ENCODE measurements at regions of chr1 and their contacts with region 1.

Region 1: GRCh38 chr1:54335755-54336108 is 70.5 kb downstream of the SSBP3 start:
- DNase-seq: peak; percentile 67 to 84
- ATAC-seq: peak; percentile 74 to 80 (median 76)
- H3K4me3 ChIP-seq: peak overlapping the region; percentile 55
- H3K27ac ChIP-seq: peak overlapping the region; percentile 93
- H3K4me1 ChIP-seq: peaks cover 86% of the 10 kb centered on the region
- H3K27me3 ChIP-seq: no peaks in the 10 kb centered on the region
- CTCF ChIP-seq: no peak

Region 2: GRCh38 chr1:54220004-54220811 is 115.5 kb before region 1 on chr1:
- intact Hi-C with region 1: no loop called
- DNase-seq: peak; percentile 79 to 85
- ATAC-seq: peak; percentile 82 to 89 (median 86)
- H3K4me3 ChIP-seq: no peak overlapping the region
- H3K27ac ChIP-seq: peak overlapping the region; percentile 67
- H3K4me1 ChIP-seq: peaks cover 20% of the 10 kb centered on the region
- H3K27me3 ChIP-seq: no peaks in the 10 kb centered on the region
- CTCF ChIP-seq: no peak

Region 3: DNA sequence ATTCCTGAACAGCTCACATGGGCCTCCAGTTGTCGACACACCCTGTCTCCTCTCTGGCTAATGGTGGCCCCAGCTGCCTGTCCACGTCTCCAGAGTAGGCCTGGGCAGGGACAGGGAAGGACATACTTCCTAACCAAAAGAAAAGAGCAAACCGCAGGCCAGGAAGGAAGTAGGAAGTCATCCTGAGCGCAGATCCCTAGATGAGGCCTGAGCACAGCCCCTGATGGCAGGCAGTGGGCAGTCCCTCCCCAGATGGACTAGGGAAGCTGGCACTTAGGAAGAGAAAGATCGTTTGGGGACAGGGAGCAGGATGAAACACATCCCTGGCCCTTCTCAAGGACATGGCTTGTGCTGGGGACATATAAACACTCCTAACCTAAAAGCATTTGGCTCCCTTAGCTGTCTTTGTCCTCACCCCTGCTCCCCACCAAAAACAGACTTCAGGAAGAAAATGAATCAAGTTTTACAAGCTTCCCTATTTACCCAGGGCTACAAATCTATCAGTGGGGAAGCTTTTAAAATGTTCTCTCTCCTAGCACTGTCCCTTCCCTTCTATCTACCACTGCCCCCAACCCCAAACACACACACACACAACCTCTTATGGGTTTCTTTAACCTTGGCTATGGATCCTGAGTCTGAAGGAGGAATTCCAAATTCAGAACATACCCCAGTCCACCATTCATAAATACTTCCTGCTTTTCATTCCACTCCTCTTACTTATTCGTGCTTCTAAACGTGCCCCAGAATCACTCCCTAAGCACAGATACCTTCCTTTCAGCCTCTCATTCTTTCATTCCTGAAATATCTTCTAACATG is 49.4 kb after region 1 on chr1:
- intact Hi-C with region 1: loop called in 1 of 2 experiments (anchors 5 kb)
- DNase-seq: peak in 1 of 2 donors; percentile 66
- ATAC-seq: peak; percentile 38 to 75 (median 68)
- H3K4me3 ChIP-seq: no peak overlapping the region
- H3K27ac ChIP-seq: peak overlapping the region; percentile 68
- H3K4me1 ChIP-seq: peaks cover 77% of the 10 kb centered on the region
- H3K27me3 ChIP-seq: no peaks in the 10 kb centered on the region
- CTCF ChIP-seq: no peak